ENCODE measurements at regions of chr22 and their contacts with region 1.

Region 1: DNA sequence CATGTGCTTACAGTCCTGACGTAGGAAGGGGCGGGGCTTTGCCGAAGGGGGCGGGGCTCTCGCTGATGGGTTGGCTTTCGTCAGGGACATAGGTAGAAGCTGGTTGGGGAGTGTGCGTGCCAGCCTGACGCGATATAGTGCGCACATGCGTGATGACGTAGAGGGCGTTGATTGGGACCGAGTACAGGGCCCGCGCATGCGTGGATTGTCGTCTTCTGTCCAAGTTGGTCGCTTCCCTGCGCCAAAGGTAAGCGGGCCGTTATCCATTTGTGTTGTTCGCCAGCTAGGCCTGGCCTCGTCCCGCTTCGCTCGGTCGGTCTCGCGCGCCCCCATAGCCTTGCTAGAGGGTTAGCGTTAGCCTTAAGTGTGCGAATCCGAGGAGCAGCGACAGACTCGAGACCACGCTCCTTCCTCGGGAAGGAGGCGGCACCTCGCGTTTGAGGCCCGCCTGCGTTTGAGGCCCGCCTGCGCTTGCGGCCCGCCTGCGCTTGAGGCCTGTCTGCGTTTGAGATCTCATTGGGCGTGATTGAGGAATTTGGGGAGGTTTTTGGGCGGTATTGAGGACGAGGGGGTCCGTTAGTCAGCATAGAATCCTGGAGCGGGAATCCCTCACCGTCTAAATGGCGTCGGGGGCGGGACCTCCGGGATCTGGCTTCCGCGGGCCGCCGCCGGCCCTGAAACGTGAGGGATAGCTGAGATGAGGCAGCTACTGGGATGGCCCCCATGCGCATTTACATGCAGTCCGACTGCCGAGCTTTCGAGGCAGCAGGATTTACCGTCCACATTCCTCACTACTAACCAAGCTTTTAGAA is at the start of gene XRCC6:
- DNase-seq: peak; percentile 100
- H3K4me3 ChIP-seq: peak within 1 kb of the TSS; percentile 85 to 100 (median 86)
- H3K4me3 Mint-ChIP-seq: peak within 1 kb of the TSS; percentile 94 to 95
- H3K27ac ChIP-seq: peak within 1 kb of the TSS; percentile 95 to 100
- H3K27ac Mint-ChIP-seq: peak within 1 kb of the TSS; percentile 97 to 100 (median 98)
- H3K4me1 ChIP-seq: peaks cover 34 to 37% of the 10 kb centered on the region in 2 donors
- H3K4me1 Mint-ChIP-seq: peaks cover 35% of the 10 kb centered on the region
- H3K27me3 ChIP-seq: no peaks in the 10 kb centered on the region
- H3K27me3 Mint-ChIP-seq: no peaks in the 10 kb centered on the region
- CTCF ChIP-seq: no peak
- polyA plus RNA-seq, gene XRCC6: 58.6 to 286 (median 267) TPM

Region 2: DNA sequence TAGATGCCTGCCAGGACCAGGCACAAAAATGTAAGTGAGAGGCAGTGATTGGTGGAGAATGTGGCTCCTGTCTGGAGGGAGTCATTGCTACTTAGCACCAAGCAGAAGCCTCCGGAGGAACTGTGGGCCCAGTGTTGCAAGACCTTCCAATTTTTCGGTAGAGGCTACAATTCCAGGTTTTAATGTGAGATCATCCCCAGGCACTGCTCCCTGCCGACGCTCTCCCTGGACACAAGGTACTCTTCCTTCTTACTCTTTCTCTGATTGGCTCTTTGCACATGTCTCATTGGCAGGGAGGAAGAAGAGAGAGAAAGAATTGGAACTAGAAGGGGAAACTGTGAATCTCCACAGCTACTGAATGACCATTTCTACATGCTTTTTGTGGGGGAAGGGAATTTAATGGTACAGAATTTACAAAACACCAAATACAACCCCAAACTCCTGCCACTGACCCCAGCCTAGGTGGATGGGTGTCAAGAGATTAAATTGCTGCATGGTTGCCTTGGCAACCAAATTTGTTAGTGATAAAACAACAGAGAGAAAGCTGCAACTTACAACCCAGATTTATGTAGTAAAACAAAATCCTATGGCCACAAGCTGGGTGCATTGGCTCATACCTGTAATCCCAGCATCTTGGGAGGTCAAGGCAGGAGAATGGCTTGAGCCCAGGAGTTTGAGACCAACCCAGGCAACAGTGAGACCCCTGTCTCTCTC is 582.4 kb before region 1 on chr22:
- intact Hi-C with region 1: no loop called
- DNase-seq: peak in 2 of 3 donors; percentile 24 to 28
- H3K4me3 ChIP-seq: no peak overlapping the region
- H3K4me3 Mint-ChIP-seq: peak overlapping the region; percentile 3 to 71
- H3K27ac ChIP-seq: peak overlapping the region in 1 of 2 donors; percentile 18
- H3K27ac Mint-ChIP-seq: peak overlapping the region; percentile 3 to 88 (median 70)
- H3K4me1 ChIP-seq: peaks cover 39 to 49% of the 10 kb centered on the region in 2 donors
- H3K4me1 Mint-ChIP-seq: peaks cover 41% of the 10 kb centered on the region
- H3K27me3 ChIP-seq: no peaks in the 10 kb centered on the region
- H3K27me3 Mint-ChIP-seq: peaks cover 0 to 2% (median 0%) of the 10 kb centered on the region in 3 donors
- CTCF ChIP-seq: no peak

Region 3: GRCh38 chr22:41448189-41448808 is 173.0 kb before region 1 on chr22:
- intact Hi-C with region 1: loop called in 1 of 2 experiments (anchors 10 kb)
- DNase-seq: peak; percentile 96 to 97 (median 97)
- H3K4me3 ChIP-seq: peak overlapping the region; percentile 73 to 99 (median 93)
- H3K4me3 Mint-ChIP-seq: peak overlapping the region; percentile 97 to 98
- H3K27ac ChIP-seq: peak overlapping the region; percentile 89 to 99
- H3K27ac Mint-ChIP-seq: peak overlapping the region; percentile 96 to 99 (median 98)
- H3K4me1 ChIP-seq: peaks cover 19 to 32% of the 10 kb centered on the region in 2 donors
- H3K4me1 Mint-ChIP-seq: peaks cover 26% of the 10 kb centered on the region
- H3K27me3 ChIP-seq: no peaks in the 10 kb centered on the region
- H3K27me3 Mint-ChIP-seq: peaks cover 0 to 2% (median 1%) of the 10 kb centered on the region in 3 donors
- CTCF ChIP-seq: no peak

Region 4: DNA sequence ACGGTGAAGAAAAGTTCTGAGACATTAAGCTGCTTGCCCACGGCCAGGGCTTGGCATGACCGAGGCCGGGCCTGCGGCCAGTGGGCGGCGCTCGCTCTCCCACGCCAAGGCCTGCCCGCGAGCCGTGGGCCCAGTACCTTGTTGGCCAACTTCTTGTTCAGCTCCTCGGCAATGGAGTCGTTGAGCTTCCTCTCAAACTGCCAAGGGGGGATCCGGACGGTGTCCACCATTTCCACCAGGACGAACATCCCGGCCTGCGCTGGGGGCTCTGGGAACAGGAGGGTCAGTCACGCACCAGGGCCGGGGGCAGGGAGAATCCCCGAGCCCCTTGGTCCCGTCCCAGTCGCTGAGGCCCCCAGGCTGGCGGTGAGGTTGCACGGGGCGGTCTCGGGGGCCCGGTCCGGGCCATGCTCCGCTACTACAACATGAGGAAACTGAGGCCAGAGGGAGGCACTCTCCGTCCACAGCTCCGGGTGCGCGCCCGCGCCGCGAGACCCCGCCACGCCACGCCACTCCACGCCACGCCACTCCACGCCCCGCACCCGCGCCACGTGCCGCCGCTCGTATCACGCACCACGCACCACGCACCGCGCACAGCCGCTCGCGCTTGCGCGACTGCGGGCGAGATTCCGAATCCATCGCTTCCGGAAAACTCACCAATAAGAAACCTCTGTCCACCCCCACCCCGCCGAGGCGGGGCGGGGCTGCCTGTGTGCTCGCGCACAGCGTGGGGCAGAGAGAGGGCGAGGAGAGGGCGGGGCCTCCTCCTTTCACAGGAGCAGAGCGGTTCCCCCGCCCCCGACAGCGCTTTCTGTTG is 77.2 kb before region 1 on chr22 and contains the start of gene POLR3H:
- intact Hi-C with region 1: loop called in 1 of 2 experiments (anchors 1 kb)
- DNase-seq: peak; percentile 96 to 99 (median 98)
- H3K4me3 ChIP-seq: peak within 1 kb of the TSS; percentile 56 to 93 (median 82)
- H3K4me3 Mint-ChIP-seq: peak within 1 kb of the TSS; percentile 87 to 94
- H3K27ac ChIP-seq: peak within 1 kb of the TSS; percentile 87 to 93
- H3K27ac Mint-ChIP-seq: peak within 1 kb of the TSS; percentile 83 to 95 (median 93)
- H3K4me1 ChIP-seq: peaks cover 17 to 24% of the 10 kb centered on the region in 2 donors
- H3K4me1 Mint-ChIP-seq: peaks cover 29% of the 10 kb centered on the region
- H3K27me3 ChIP-seq: no peaks in the 10 kb centered on the region
- H3K27me3 Mint-ChIP-seq: peaks cover 0 to 4% (median 2%) of the 10 kb centered on the region in 3 donors
- CTCF ChIP-seq: peak; percentile 79
- polyA plus RNA-seq, gene POLR3H: 9.4 to 19.0 (median 10.4) TPM

Region 5: DNA sequence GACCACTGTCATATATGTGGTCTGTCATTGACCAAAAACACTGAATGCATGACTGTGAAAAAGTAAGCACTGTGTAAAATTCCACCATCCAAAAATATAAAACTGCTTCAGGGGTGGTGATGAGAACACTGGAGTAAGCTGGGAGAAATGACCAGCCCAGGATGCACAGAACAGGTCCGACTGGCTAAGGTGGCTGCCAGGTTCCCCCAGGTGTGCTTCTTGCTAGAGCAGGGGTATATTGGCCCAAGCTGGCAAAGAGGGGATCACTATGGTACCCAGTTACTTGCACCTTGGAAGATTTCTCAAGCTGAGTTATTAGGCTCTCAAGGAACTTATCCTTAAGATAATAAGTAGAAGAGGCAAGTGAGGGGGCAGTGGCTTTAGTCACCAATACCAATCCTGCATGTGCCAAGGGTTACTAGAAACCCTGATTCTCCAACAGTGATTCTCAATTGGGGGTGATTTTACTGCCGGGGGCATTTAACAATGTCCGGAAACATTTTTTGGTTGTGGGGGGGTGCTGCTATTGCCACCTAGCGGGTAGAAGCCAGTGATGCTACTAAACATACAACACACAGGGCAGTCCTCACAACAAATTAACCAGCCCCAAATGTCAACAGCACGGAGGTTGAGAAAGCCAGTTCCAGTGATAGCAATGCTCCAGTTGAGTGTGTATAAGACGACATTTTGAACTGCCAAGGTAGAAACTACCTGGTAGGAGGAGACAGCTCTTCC is 51.6 kb after region 1 on chr22:
- intact Hi-C with region 1: no loop called
- DNase-seq: no peak
- H3K4me3 ChIP-seq: no peak overlapping the region
- H3K4me3 Mint-ChIP-seq: no peak overlapping the region
- H3K27ac ChIP-seq: no peak overlapping the region
- H3K27ac Mint-ChIP-seq: peak overlapping the region in 2 of 7 donors; percentile 30 to 50
- H3K4me1 ChIP-seq: no peaks in the 10 kb centered on the region
- H3K4me1 Mint-ChIP-seq: no peaks in the 10 kb centered on the region
- H3K27me3 ChIP-seq: no peaks in the 10 kb centered on the region
- H3K27me3 Mint-ChIP-seq: no peaks in the 10 kb centered on the region
- CTCF ChIP-seq: no peak

Region 6: GRCh38 chr22:41951898-41952474 is 330.7 kb after region 1 on chr22 and contains the start of gene SMIM45:
- intact Hi-C with region 1: no loop called
- DNase-seq: no peak
- H3K4me3 ChIP-seq: no peak within 1 kb of the TSS
- H3K4me3 Mint-ChIP-seq: no peak within 1 kb of the TSS
- H3K27ac ChIP-seq: no peak within 1 kb of the TSS
- H3K27ac Mint-ChIP-seq: peak within 1 kb of the TSS in 1 of 7 donors; percentile 65
- H3K4me1 ChIP-seq: peaks cover 3 to 6% of the 10 kb centered on the region in 2 donors
- H3K4me1 Mint-ChIP-seq: peaks cover 3% of the 10 kb centered on the region
- H3K27me3 ChIP-seq: no peaks in the 10 kb centered on the region
- H3K27me3 Mint-ChIP-seq: peaks cover 0 to 13% (median 2%) of the 10 kb centered on the region in 3 donors
- CTCF ChIP-seq: no peak

Region 7: DNA sequence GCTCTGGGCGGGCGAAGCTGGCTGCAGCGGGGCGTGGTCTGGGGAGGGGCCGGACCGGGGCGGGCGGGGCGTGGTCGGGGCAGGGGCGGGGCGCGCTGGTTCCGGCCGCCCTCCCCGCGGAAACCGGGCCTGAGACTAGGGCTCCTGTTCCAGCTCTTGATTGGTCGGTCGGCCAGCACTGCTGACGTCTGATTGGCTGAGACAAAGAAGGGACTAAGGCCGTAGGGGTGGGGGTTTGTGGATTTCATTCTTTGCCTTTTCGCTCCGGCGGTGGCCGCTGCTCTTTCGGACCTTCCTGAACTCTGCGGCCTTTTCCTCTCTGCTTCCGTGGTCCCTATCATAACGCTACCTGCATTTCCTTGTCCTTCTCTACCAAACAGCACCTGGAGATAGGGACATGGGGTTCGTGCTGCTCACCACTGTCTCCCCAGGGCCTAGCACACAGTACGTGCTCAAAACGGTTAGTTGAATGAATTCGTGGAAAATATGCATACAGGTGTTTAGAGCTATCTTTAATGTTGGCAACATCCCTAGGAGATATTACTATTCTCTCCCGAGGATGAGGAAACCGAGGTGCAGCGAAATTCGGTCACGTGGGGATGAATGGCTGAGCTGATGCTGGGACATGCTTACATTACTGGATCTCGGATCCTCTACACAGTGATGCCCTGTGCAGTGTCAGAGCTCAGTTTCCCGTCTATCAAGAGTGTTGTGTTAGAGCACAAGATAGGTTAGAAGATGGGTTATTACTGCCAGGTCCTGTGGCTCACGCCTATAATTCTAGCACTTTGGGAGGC is 748.1 kb after region 1 on chr22:
- intact Hi-C with region 1: loop called in 1 of 2 experiments (anchors 10 kb)
- DNase-seq: peak; percentile 79 to 90 (median 88)
- H3K4me3 ChIP-seq: peak overlapping the region; percentile 40 to 74 (median 42)
- H3K4me3 Mint-ChIP-seq: peak overlapping the region; percentile 81 to 93
- H3K27ac ChIP-seq: no peak overlapping the region
- H3K27ac Mint-ChIP-seq: peak overlapping the region in 6 of 7 donors; percentile 56 to 86 (median 74)
- H3K4me1 ChIP-seq: peaks cover 20 to 26% of the 10 kb centered on the region in 2 donors
- H3K4me1 Mint-ChIP-seq: peaks cover 27% of the 10 kb centered on the region
- H3K27me3 ChIP-seq: peaks cover 37 to 47% of the 10 kb centered on the region in 2 donors
- H3K27me3 Mint-ChIP-seq: peaks cover 50 to 76% (median 60%) of the 10 kb centered on the region in 3 donors
- CTCF ChIP-seq: no peak

Measured in CD14-positive monocyte (primary cell).